Activated naive CD4-positive, alpha-beta T cell treated with anti-CD3 and anti-CD28 coated beads for 36 hours (primary cell): ENCODE measurements at regions of chrX and their contacts with region 1.

Region 1: GRCh38 chrX:48957827-48958634 is 624 bp upstream of the OTUD5 start:
- DNase-seq: peak; percentile 96
- H3K4me3 Mint-ChIP-seq: peak overlapping the region; percentile 98
- H3K27ac Mint-ChIP-seq: peak overlapping the region; percentile 100
- H3K4me1 Mint-ChIP-seq: peaks cover 47% of the 10 kb centered on the region
- H3K27me3 Mint-ChIP-seq: no peaks in the 10 kb centered on the region

Region 2: DNA sequence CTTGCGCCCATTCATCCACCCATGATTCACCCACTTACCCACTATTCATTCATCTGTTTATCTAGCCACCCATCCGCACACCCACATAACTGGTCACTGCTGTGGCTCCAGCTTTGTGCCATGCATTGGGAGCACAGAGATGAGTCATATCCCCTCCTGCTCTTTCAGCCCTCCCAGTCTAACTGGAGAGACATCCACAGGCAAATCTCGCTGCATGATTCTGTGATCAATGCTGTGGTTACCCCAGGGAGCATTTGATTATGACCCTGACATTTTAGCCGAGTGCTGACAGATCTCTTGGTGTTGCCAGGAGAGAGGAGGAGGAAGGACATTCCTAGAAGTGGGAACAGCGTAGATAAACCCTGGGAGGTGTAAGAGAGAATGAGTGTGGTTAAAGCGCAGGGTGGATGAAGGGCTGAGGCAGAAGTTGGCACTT is 459.6 kb before region 1 on chrX:
- CTCF ChIA-PET with region 1: no interaction called
- intact Hi-C with region 1: no loop called
- DNase-seq: no peak
- H3K4me3 Mint-ChIP-seq: no peak overlapping the region
- H3K27ac Mint-ChIP-seq: no peak overlapping the region
- H3K4me1 Mint-ChIP-seq: no peaks in the 10 kb centered on the region
- H3K27me3 Mint-ChIP-seq: no peaks in the 10 kb centered on the region

Region 3: GRCh38 chrX:48574270-48575266 is 383.5 kb before region 1 on chrX and contains the start of gene RBM3:
- CTCF ChIA-PET with region 1: no interaction called
- intact Hi-C with region 1: loop called (anchors 1 kb)
- DNase-seq: peak; percentile 95
- H3K4me3 Mint-ChIP-seq: peak within 1 kb of the TSS; percentile 96
- H3K27ac Mint-ChIP-seq: peak within 1 kb of the TSS; percentile 99
- H3K4me1 Mint-ChIP-seq: peaks cover 32% of the 10 kb centered on the region
- H3K27me3 Mint-ChIP-seq: no peaks in the 10 kb centered on the region
- total RNA-seq, gene RBM3: 139 to 143 TPM

Region 4: GRCh38 chrX:48696301-48697181 is 261.5 kb before region 1 on chrX and contains the start of gene SUV39H1:
- CTCF ChIA-PET with region 1: no interaction called
- intact Hi-C with region 1: loop called (anchors 2 kb)
- DNase-seq: peak; percentile 87
- H3K4me3 Mint-ChIP-seq: peak within 1 kb of the TSS; percentile 89
- H3K27ac Mint-ChIP-seq: peak within 1 kb of the TSS; percentile 91
- H3K4me1 Mint-ChIP-seq: peaks cover 36% of the 10 kb centered on the region
- H3K27me3 Mint-ChIP-seq: no peaks in the 10 kb centered on the region
- total RNA-seq, gene SUV39H1: 31.5 to 31.9 TPM

Region 5: GRCh38 chrX:48937054-48937907 is 20.8 kb before region 1 on chrX:
- CTCF ChIA-PET with region 1: interaction called, 4 read pairs
- intact Hi-C with region 1: loop called (anchors 1 kb)
- DNase-seq: peak; percentile 95
- H3K4me3 Mint-ChIP-seq: peak overlapping the region; percentile 75
- H3K27ac Mint-ChIP-seq: peak overlapping the region; percentile 100
- H3K4me1 Mint-ChIP-seq: peaks cover 81% of the 10 kb centered on the region
- H3K27me3 Mint-ChIP-seq: no peaks in the 10 kb centered on the region

Region 6: GRCh38 chrX:49079489-49080428 is 121.7 kb after region 1 on chrX and contains the start of gene WDR45:
- CTCF ChIA-PET with region 1: no interaction called
- intact Hi-C with region 1: loop called (anchors 1 kb)
- DNase-seq: peak; percentile 79
- H3K4me3 Mint-ChIP-seq: peak within 1 kb of the TSS; percentile 94
- H3K27ac Mint-ChIP-seq: peak within 1 kb of the TSS; percentile 96
- H3K4me1 Mint-ChIP-seq: peaks cover 11% of the 10 kb centered on the region
- H3K27me3 Mint-ChIP-seq: no peaks in the 10 kb centered on the region
- total RNA-seq, gene WDR45: 17.9 to 22.5 TPM

Region 7: GRCh38 chrX:49120099-49120498 is 162.1 kb after region 1 on chrX:
- CTCF ChIA-PET with region 1: no interaction called
- intact Hi-C with region 1: loop called (anchors 1 kb)
- DNase-seq: no peak
- H3K4me3 Mint-ChIP-seq: no peak overlapping the region
- H3K27ac Mint-ChIP-seq: no peak overlapping the region
- H3K4me1 Mint-ChIP-seq: peaks cover 35% of the 10 kb centered on the region
- H3K27me3 Mint-ChIP-seq: no peaks in the 10 kb centered on the region